Kidney (tissue), 22 donors: ENCODE measurements at regions of chr15 and their contacts with region 1.

Region 1: DNA sequence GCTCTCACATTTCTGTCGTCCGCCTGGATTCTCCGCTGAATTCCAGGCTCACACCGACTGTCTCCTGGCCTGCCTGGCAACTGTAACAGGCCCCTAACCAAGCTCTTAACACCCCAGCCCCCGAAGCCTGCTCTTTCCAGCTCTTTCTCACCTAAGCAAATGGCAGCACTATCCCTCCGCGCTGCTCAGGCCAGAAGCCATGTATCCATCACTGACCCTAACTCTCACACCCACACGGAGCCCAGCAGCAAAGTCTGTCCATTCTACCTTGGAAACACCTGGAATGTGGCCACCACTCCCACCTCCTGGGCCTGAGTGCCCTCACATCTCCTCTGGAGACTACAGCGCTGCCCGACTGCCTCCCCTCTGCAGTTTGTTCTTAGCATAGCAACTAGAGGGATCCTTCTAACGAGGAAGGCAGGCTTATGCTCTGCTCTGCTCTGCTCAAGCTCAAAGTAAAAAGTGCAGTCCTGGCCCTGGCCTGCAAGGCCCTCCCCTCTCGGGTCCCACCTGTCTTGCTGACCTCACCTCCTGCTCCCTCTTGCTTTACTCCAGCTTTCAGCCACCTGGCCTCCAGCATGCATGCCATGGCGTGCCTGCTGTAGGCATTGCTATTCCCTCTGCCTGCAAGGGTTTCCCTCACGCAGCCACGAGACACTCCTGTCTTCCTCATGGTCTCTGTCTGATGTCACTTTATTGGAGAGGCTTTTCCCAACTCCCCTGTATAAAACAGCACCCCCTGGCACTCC is 27.2 kb downstream of the FEM1B start:
- DNase-seq: peak in 2 of 5 donors; percentile 29 to 35
- H3K4me3 ChIP-seq: no peak overlapping the region
- H3K27ac ChIP-seq: no peak overlapping the region
- H3K4me1 ChIP-seq: peaks cover 0 to 3% (median under 1%) of the 10 kb centered on the region in 3 donors
- H3K27me3 ChIP-seq: no peaks in the 10 kb centered on the region
- CTCF ChIP-seq: no peak

Region 2: DNA sequence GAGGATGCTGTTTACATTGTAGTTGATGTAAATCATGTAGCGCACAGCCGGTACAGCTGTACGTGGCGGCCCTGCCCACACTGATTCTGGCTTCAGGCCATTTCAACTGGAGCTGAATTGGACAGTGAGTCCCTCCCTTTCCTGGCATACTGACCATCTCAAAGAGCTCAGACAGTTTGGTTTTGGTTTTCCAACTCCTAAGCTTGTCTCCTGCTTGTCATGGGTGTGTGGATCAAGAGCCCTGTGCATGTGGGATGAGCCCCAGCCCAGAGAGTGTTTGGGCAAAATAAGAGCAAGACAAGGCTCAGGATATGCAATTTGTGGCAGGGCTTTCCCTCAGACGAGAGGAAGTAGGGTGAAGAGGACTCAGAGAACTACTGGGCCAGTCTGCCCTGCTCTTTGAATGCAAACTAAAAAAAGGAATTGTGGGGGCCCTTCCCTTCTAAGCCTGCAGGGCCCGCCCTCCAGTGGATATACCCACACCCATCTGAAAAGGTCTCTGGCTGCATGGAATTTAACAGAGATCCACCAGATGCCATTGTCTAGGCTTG is 113.9 kb after region 1 on chr15:
- intact Hi-C with region 1: no loop called
- DNase-seq: peak; percentile 53 to 78 (median 61)
- H3K4me3 ChIP-seq: no peak overlapping the region
- H3K27ac ChIP-seq: no peak overlapping the region
- H3K4me1 ChIP-seq: no peaks in the 10 kb centered on the region
- H3K27me3 ChIP-seq: no peaks in the 10 kb centered on the region
- CTCF ChIP-seq: no peak

Region 3: GRCh38 chr15:68672781-68673205 is 368.0 kb after region 1 on chr15:
- intact Hi-C with region 1: loop called (anchors 10 kb)
- DNase-seq: peak in 2 of 5 donors; percentile 18 to 36
- H3K4me3 ChIP-seq: no peak overlapping the region
- H3K27ac ChIP-seq: no peak overlapping the region
- H3K4me1 ChIP-seq: peaks cover 0 to 9% (median 5%) of the 10 kb centered on the region in 3 donors
- H3K27me3 ChIP-seq: no peaks in the 10 kb centered on the region
- CTCF ChIP-seq: no peak